Adrenal gland (tissue), 19 donors: ENCODE measurements at regions of chr3 and their contacts with region 1.

Region 1: DNA sequence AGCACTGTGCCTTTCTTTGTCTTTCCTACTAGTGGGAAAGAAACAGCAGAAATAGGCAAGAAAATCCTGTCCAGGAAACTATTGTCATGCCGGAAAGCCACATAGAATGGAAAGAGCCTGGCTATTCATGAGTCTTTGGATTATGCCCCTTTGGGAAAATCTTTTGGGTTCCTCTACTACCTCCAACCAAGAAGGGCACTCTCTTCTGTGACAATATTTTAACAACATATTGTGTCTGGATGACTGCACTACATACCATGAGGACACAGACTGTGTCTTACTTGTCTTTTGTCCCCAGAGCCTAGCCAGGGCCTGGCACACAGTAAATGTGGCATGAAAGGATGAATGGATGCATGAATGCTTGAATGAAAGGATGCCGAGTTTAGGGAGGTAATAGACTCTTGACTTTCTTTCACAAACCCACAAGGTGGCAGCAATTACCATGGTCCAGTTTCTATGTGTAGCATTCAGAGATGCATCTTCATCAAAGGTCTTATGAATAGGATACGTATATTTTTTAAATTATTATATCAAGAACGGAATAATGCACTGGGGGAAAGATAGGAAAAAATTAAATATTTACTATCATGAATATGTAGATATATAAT is 30.3 kb downstream of the ARL14 start:
- DNase-seq: peak in 6 of 7 donors; percentile 39 to 63 (median 52)
- H3K4me3 ChIP-seq: no peak overlapping the region
- H3K27ac ChIP-seq: no peak overlapping the region
- H3K4me1 ChIP-seq: no peaks in the 10 kb centered on the region
- H3K27me3 ChIP-seq: no peaks in the 10 kb centered on the region
- CTCF ChIP-seq: peak; percentile 35 to 80 (median 68)
- POLR2A ChIP-seq: no peak

Region 2: GRCh38 chr3:160941885-160942494 is 234.7 kb after region 1 on chr3:
- intact Hi-C with region 1: loop called (anchors 5 to 10 kb)
- DNase-seq: peak; percentile 59 to 93 (median 81)
- H3K4me3 ChIP-seq: no peak overlapping the region
- H3K27ac ChIP-seq: no peak overlapping the region
- H3K4me1 ChIP-seq: no peaks in the 10 kb centered on the region
- H3K27me3 ChIP-seq: no peaks in the 10 kb centered on the region
- CTCF ChIP-seq: peak; percentile 82 to 94 (median 92)
- POLR2A ChIP-seq: no peak

Region 3: DNA sequence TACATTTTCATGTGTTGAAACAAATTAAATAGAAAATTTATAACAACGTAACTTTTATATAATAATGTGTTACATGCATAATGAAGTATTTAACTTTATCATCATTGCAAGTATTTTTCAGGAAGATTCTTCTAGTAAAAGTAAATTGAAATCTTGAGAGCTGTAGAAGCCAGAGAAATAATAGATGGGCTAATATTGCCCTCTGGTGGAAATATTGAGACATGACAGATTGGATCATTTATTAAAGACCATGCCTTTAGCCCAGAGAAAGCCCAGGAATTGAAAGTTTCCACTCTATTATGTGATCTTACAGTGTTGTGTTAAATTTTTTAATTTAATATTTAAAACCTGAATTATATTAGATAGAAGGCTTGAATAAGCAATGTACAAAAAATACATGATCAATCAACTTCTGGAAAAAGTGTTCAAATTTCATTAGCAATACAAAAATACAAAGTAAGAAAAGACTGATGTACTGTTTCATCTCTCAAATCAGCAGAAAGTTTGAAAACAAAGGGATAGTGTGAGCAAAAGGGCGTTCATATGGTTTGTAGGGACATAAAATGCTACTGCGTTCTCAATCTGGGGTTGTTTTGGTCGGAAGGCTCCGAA is 716.7 kb after region 1 on chr3:
- intact Hi-C with region 1: loop called in 1 of 2 experiments (anchors 10 kb)
- DNase-seq: no peak
- H3K4me3 ChIP-seq: no peak overlapping the region
- H3K27ac ChIP-seq: no peak overlapping the region
- H3K4me1 ChIP-seq: no peaks in the 10 kb centered on the region
- H3K27me3 ChIP-seq: no peaks in the 10 kb centered on the region
- CTCF ChIP-seq: peak; percentile 74 to 89 (median 82)
- POLR2A ChIP-seq: no peak